ENCODE measurements at regions of chr9 and their contacts with region 1.

Region 1: GRCh38 chr9:71897577-71897976 is 13.4 kb downstream of the ABHD17B start:
- DNase-seq: no peak
- H3K4me3 Mint-ChIP-seq: peak overlapping the region; percentile 35
- H3K27ac Mint-ChIP-seq: peak overlapping the region; percentile 61
- H3K4me1 Mint-ChIP-seq: peaks cover 88% of the 10 kb centered on the region
- H3K27me3 Mint-ChIP-seq: no peaks in the 10 kb centered on the region

Region 2: GRCh38 chr9:71783120-71783530 is 114.5 kb before region 1 on chr9:
- intact Hi-C with region 1: loop called (anchors 2 kb)
- DNase-seq: peak; percentile 80
- H3K4me3 Mint-ChIP-seq: peak overlapping the region; percentile 63
- H3K27ac Mint-ChIP-seq: peak overlapping the region; percentile 93
- H3K4me1 Mint-ChIP-seq: peaks cover 42% of the 10 kb centered on the region
- H3K27me3 Mint-ChIP-seq: peaks cover 2% of the 10 kb centered on the region

Region 3: DNA sequence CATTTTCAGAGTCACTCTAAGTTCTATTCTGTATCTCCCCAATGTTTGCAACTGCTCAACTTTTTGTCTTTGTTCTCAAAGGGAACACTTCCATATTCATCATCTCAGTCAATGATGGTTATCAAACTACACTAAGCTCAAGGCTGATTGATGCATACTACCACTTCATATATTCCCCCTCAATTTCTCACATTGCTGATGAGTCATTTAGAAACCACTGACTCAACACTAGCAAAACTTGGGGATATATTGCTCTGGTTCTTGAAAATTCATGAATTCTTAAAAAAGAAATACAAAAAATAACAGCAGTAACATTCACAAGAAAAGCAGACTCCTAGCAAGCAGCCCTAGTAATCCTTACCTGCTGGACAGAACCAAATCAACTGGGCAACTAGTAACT is 38.8 kb before region 1 on chr9:
- intact Hi-C with region 1: loop called (anchors 1 kb)
- DNase-seq: peak; percentile 3
- H3K4me3 Mint-ChIP-seq: peak overlapping the region; percentile 0
- H3K27ac Mint-ChIP-seq: peak overlapping the region; percentile 51
- H3K4me1 Mint-ChIP-seq: peaks cover 25% of the 10 kb centered on the region
- H3K27me3 Mint-ChIP-seq: no peaks in the 10 kb centered on the region

Region 4: DNA sequence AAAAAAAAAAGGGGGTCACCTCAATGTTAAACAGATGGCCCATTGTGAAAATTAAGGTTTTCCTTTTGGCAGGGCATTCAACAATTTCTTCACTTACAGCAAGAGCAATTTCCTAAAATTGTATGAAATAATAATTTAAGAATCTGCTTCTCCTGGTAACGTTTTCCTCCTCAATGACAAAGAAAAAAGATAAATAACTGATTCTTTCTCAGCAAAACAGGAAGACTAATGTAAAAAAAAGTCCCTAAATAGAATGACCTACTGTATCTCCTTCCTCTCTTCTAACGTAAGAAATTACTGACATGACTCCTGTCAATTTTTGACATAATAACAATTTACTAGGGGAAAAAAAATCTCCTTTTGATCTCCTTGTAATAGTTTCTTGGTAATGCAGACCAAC is 12.1 kb before region 1 on chr9:
- intact Hi-C with region 1: loop called (anchors 1 kb)
- DNase-seq: no peak
- H3K4me3 Mint-ChIP-seq: peak overlapping the region; percentile 12
- H3K27ac Mint-ChIP-seq: peak overlapping the region; percentile 71
- H3K4me1 Mint-ChIP-seq: peaks cover 39% of the 10 kb centered on the region
- H3K27me3 Mint-ChIP-seq: no peaks in the 10 kb centered on the region

Region 5: DNA sequence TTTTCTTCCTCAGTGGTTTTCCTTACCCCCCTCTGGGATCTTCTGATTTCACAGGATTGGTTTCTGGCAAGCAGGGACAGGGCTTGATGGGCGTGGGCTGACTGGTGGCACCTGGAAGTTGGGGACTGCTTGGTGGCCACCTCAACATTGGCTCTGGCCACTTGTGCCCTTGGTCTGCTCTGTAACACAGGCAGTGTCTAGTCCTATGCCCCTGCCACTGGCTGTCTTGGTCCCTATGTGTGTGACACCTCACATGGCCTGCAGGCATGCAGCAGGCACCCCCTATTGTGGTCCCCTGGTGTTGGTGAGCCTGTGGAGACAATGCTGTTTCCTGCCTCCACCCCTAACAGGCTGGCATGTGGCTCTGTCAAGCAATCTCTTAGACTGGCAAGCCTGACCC is 323.0 kb after region 1 on chr9:
- intact Hi-C with region 1: no loop called
- DNase-seq: no peak
- H3K4me3 Mint-ChIP-seq: no peak overlapping the region
- H3K27ac Mint-ChIP-seq: no peak overlapping the region
- H3K4me1 Mint-ChIP-seq: no peaks in the 10 kb centered on the region
- H3K27me3 Mint-ChIP-seq: peaks cover 7% of the 10 kb centered on the region

Region 6: GRCh38 chr9:72349240-72349639 is 451.7 kb after region 1 on chr9:
- intact Hi-C with region 1: loop called (anchors 5 kb)
- DNase-seq: no peak
- H3K4me3 Mint-ChIP-seq: no peak overlapping the region
- H3K27ac Mint-ChIP-seq: peak overlapping the region; percentile 26
- H3K4me1 Mint-ChIP-seq: peaks cover 21% of the 10 kb centered on the region
- H3K27me3 Mint-ChIP-seq: no peaks in the 10 kb centered on the region

Measured in activated T-helper 1 cell treated with anti-CD3 and anti-CD28 coated beads, Interleukin-12 subunit alpha, Interleukin-12 subunit beta, Interleukin-2, Interleukin-4 antibody, amounts not matched to agents 30 ng/mL and 10 ng/mL and 1 ng/mL, durations not matched to agents 14 hours and 24 hours and 36 hours (primary cell).